ENCODE measurements at regions of chr19 and their contacts with region 1.

Region 1: DNA sequence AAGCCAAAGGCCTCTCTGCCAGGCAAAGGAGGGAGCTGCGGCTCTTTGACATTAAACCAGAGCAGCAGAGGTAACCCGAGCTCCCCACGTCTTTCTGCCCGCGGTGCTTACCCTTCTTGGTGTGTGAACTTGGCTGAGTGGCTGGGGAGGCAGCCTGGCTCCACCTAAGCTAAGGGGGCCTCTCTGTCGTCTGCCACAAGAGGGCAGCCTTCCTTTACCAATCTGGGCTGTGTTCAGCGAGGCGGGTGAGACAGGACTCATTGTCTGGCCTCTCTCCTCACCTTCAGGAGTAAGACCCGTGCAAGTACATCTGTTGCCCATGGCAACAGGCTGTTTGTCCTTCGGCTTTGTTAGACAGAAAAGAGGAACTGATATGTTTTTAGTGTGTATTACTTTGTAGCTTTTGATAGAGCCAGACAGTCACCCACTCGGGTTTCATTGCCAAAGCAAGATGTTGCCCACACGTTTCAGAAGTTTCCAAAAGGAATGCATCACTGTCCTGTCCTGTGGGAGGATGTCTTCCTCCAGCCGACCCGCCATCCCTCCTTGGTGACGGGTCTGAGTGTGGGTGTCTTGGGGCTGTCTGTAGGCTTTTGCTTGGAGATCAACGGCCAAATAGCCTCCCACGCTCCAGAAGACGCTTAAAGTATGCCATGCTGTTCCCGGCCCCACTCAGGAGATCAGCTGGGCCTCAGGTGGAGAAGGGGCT is 4.6 kb downstream of the POP4 start:
- DNase-seq: peak; percentile 93
- H3K4me3 ChIP-seq: no peak overlapping the region
- H3K27ac ChIP-seq: no peak overlapping the region
- H3K4me1 ChIP-seq: peaks cover 9 to 27% (median 20%) of the 10 kb centered on the region in 4 donors
- H3K27me3 ChIP-seq: no peaks in the 10 kb centered on the region
- CTCF ChIP-seq: peak; percentile 85 to 92 (median 86)
- EP300 ChIP-seq: no peak
- POLR2A ChIP-seq: no peak

Region 2: DNA sequence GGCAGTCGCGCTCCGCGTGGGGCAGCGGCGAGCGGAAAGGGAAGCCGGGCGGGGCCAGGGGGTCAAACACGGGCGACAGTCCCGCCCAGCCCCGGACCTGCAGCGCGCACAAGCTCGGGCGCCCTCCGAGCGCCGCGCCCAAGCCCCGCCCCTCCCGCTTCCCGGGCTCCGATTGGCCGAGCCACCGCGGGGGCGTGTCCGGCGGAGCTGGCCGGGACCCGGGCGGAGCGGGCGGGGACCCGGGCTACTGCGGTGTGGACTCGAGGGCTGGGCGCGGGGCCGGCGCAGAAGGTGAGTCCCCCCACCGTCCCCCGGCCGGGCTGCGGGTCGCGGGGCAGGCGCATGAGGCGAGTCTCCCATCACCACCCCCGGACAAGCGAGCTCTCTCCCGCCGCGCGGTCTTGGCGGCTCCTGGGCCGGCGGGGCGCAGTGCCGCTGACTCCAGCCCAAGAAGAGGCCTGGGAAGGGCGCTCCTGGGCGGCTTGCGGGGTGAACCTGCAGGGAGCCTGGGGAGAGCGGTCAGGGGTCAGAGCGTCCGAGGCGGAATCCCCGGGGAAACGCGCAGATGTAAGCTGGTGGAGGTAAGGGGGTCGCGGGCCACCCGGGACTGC is 54.6 kb after region 1 on chr19 and contains the start of gene PLEKHF1:
- intact Hi-C with region 1: loop called (anchors 2 kb)
- DNase-seq: peak; percentile 96
- H3K4me3 ChIP-seq: peak within 1 kb of the TSS; percentile 72 to 93 (median 80)
- H3K27ac ChIP-seq: peak within 1 kb of the TSS; percentile 84 to 93 (median 87)
- H3K4me1 ChIP-seq: peaks cover 71 to 94% (median 92%) of the 10 kb centered on the region in 4 donors
- H3K27me3 ChIP-seq: no peaks in the 10 kb centered on the region
- CTCF ChIP-seq: no peak
- EP300 ChIP-seq: no peak
- POLR2A ChIP-seq: peak; percentile 65
- total RNA-seq, gene PLEKHF1: 27.4 to 58.6 (median 36.1) TPM

Region 3: DNA sequence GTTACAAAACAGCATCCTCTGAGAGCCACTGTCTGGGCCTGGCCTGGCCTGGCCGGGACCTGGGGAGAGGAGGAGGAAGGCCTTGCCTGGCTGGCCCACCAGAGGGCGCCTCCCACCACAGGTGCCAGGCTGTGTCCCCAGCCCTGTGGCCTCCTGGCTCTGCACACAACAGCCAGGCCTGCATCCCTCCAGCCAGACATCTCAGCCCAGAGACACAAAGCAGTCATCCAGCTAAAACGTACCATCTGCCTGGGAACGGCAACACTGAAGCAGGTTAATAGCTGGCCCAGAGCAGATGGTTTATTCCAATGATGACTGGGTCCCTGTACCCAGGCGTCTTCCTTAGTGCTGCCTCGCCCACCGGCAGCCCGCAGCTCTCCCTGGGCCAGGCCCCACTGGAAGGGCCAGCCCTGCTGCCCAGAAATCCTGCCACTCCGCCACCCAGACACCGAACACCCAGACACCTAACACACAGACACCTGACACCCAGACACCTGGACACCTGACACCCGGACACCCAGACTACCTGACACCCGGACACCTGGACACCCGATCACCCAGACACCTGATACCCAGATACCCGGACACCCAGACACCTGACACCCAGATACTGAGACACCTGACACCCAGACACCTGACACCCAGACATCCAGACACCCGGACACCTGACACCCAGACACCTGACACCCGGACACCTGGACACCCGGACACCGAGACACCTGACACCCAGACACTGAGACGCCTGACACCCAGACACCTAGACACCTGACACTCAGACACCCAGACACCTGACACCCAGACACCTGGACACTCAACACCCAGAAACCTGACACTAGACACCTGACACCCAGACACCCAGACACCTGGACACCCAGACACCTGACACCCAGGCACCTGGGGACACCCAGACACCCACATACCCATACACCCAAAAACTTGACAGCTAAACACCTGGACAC is 84.2 kb after region 1 on chr19:
- intact Hi-C with region 1: loop called (anchors 1 kb)
- DNase-seq: peak; percentile 94
- H3K4me3 ChIP-seq: no peak overlapping the region
- H3K27ac ChIP-seq: peak overlapping the region in 3 of 4 donors; percentile 36 to 41 (median 37)
- H3K4me1 ChIP-seq: peaks cover 0 to 25% (median 23%) of the 10 kb centered on the region in 4 donors
- H3K27me3 ChIP-seq: no peaks in the 10 kb centered on the region
- CTCF ChIP-seq: peak; percentile 79 to 94 (median 84)
- EP300 ChIP-seq: no peak
- POLR2A ChIP-seq: no peak

Region 4: DNA sequence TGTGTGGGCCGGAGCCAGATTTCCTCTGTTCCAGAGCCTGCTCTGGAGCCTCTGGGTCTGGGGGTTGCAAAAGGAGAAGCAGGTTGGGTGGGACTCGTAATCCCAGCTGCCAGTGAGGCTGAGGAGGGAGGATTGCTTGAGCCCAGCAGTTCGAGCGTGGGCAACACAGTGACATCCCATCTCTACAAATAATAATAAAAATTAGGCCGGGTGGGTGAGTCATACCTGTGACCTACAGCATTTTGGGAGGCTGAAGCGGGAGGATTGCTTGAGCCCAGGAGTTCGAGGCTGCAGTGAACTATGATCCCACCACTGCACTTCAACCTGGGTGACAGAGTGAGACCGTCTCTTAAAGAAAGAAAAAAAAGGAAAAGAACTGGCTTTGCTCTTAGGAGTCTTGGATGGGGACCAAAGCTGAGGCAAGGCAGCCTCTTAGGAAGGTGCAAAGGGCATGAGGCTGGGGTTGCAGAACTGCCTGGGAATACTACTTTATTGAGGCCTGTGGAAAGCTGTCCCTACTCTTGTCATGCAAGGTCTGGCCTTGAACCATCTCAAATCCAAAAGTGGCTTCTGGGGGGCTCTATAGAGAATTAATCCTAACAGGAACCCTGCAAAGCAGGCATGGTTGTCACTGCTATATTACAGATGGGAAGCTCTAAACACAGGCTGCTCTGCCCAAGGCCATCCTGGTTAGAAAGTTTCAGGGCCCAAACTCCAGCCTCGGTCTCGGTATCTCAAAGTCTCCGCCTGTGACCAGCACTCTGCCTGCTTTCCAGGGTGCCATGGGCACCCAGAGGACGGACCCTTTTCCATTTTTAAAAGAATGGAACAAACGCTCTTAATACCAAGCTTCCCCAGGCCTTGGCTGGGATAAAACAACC is 105.2 kb after region 1 on chr19:
- intact Hi-C with region 1: loop called (anchors 1 kb)
- DNase-seq: no peak
- H3K4me3 ChIP-seq: peak overlapping the region; percentile 68 to 100 (median 98)
- H3K27ac ChIP-seq: peak overlapping the region; percentile 91 to 97 (median 94)
- H3K4me1 ChIP-seq: peaks cover 17 to 53% (median 42%) of the 10 kb centered on the region in 4 donors
- H3K27me3 ChIP-seq: no peaks in the 10 kb centered on the region
- CTCF ChIP-seq: no peak
- EP300 ChIP-seq: no peak
- POLR2A ChIP-seq: no peak

Region 5: DNA sequence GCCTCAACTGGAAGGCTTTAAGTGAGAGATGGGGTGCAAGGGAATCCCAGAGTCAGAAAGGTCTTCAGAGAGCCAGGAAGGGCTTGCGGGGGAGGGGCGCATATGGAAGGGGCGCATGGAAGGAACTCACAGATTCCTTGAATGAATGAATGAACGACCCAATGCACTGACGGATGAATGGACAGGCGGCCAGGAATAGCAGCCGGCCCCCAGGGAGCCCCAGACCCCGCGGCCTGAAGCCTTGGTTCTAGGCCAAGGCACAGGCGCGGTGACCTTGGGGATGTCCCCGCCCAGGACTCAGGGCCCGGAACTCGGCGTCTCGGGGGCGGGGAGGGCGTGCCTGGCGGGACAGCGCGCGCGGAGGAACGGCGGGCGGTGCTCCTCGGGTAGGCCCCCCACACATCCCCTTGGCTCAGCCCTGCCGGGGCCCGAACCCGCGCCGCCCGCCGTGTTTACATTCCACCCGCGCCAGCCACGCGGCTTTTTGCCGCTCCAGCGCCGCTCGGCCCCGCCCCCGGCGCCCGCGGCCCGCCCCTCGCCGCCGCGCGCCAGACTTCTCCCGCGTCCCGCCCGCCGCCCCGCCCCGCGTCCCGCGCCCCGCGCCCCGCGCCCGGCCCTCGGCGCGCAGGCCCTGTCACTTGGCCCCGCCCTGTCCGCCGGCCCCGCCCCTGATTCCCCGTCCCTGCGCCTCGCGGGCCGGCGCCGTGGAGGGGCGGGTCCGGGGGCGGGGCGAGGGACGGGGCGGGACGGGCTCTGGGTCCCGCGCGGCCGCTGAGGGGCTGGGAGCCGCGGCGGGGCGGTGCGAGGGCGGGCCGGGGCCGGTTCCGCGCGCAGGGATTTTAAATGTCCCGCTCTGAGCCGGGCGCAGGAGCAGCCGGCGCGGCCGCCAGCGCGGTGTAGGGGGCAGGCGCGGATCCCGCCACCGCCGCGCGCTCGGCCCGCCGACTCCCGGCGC is 200.7 kb after region 1 on chr19 and contains the start of gene CCNE1:
- intact Hi-C with region 1: loop called (anchors 10 kb)
- DNase-seq: peak; percentile 95
- H3K4me3 ChIP-seq: peak within 1 kb of the TSS; percentile 61 to 82 (median 70)
- H3K27ac ChIP-seq: peak within 1 kb of the TSS; percentile 65 to 80 (median 74)
- H3K4me1 ChIP-seq: peaks cover 0 to 21% (median 16%) of the 10 kb centered on the region in 4 donors
- H3K27me3 ChIP-seq: no peaks in the 10 kb centered on the region
- CTCF ChIP-seq: no peak
- EP300 ChIP-seq: no peak
- POLR2A ChIP-seq: no peak
- total RNA-seq, gene CCNE1: 0.42 to 4.0 (median 2.4) TPM

Measured in esophagus muscularis mucosa (tissue), 4 donors.